H1 (cell line): ENCODE measurements at regions of chr11 and their contacts with region 1.

Region 1: GRCh38 chr11:66311965-66312548 is 4.8 kb downstream of the CD248 start:
- DNase-seq: peak; percentile 71 to 92
- H3K4me3 ChIP-seq: peak overlapping the region; percentile 44 to 79 (median 71)
- H3K27ac ChIP-seq: peak overlapping the region; percentile 7
- H3K4me1 ChIP-seq: peaks cover 3 to 17% (median 8%) of the 10 kb centered on the region in 4 experiments
- H3K27me3 ChIP-seq: peaks cover 0 to 3% (median 0%) of the 10 kb centered on the region in 4 experiments; a peak in 2 of 7 replicates
- CTCF ChIP-seq: peak in 2 of 3 experiments; percentile 84 to 93; a peak in 3 of 4 replicates
- EP300 ChIP-seq: no peak
- POLR2A ChIP-seq: peak in 1 of 2 experiments; percentile 35; a peak in 1 of 3 replicates
- RAD21 ChIP-seq: peak; percentile 92 to 93

Region 2: DNA sequence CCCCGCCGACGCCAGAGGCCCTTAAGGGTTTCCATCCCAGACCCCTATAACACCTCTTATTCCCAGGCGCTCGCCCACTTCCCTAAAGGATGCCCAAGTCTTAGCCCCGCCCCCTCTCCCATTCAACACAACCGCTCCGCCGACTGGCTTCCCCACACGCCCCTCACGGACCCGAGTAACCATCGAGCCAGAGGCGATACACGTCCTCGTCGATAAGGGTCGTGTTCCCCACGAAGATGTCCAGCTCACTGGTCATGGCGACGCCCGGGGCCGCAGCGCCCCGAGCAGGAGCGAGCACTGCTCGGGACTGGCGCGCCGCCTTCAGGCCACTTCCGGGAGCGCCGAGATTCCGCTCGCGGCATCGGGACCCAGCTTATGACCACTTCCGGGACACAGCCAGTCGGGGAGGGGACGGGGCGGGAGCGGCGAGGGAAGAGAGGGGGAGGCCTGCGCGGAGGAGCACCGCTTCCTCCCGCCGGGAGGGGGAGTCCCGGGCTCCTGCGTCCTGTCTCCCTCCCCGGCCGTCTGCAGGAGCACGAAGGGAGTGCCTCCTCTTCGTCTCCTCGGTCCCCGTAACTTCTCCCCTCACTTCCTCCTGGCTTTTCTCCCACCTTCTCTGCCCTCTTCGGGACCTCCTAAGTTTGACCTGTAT is 423.8 kb before region 1 on chr11 and contains the start of gene FIBP:
- CTCF ChIA-PET with region 1: no interaction called
- POLR2A ChIA-PET with region 1: no interaction called
- DNase-seq: peak; percentile 87 to 98
- H3K4me3 ChIP-seq: peak within 1 kb of the TSS; percentile 73 to 84 (median 79)
- H3K27ac ChIP-seq: peak within 1 kb of the TSS; percentile 75
- H3K4me1 ChIP-seq: peaks cover 0 to 27% (median 12%) of the 10 kb centered on the region in 4 experiments; a peak in 5 of 7 replicates
- H3K27me3 ChIP-seq: peaks cover 0 to 14% (median 8%) of the 10 kb centered on the region in 4 experiments; a peak in 6 of 7 replicates
- CTCF ChIP-seq: peak in 2 of 3 experiments; percentile 80 to 84; a peak in 3 of 4 replicates
- EP300 ChIP-seq: no peak; a peak in 1 of 3 replicates
- POLR2A ChIP-seq: peak in 1 of 2 experiments; percentile 93; a peak in 2 of 3 replicates
- RAD21 ChIP-seq: peak; percentile 42 to 64
- total RNA-seq, gene FIBP: 74.3 and 79.9 TPM in 2 replicates

Region 3: GRCh38 chr11:66268283-66268951 is 43.6 kb before region 1 on chr11 and contains the start of gene RAB1B:
- CTCF ChIA-PET with region 1: interaction called, 12 read pairs
- POLR2A ChIA-PET with region 1: no interaction called
- DNase-seq: peak; percentile 99 to 100
- H3K4me3 ChIP-seq: peak within 1 kb of the TSS; percentile 57 to 91 (median 82)
- H3K27ac ChIP-seq: peak within 1 kb of the TSS; percentile 92; the same call in 1 of the 2 replicates
- H3K4me1 ChIP-seq: peaks cover 0 to 5% (median 3%) of the 10 kb centered on the region in 4 experiments; a peak in 5 of 7 replicates
- H3K27me3 ChIP-seq: no peaks in the 10 kb centered on the region
- CTCF ChIP-seq: no peak; a peak in 1 of 4 replicates
- EP300 ChIP-seq: no peak
- POLR2A ChIP-seq: peak in 1 of 2 experiments; percentile 85; a peak in 2 of 3 replicates
- RAD21 ChIP-seq: no peak
- total RNA-seq, gene RAB1B: 100 and 106 TPM in 2 replicates

Region 4: DNA sequence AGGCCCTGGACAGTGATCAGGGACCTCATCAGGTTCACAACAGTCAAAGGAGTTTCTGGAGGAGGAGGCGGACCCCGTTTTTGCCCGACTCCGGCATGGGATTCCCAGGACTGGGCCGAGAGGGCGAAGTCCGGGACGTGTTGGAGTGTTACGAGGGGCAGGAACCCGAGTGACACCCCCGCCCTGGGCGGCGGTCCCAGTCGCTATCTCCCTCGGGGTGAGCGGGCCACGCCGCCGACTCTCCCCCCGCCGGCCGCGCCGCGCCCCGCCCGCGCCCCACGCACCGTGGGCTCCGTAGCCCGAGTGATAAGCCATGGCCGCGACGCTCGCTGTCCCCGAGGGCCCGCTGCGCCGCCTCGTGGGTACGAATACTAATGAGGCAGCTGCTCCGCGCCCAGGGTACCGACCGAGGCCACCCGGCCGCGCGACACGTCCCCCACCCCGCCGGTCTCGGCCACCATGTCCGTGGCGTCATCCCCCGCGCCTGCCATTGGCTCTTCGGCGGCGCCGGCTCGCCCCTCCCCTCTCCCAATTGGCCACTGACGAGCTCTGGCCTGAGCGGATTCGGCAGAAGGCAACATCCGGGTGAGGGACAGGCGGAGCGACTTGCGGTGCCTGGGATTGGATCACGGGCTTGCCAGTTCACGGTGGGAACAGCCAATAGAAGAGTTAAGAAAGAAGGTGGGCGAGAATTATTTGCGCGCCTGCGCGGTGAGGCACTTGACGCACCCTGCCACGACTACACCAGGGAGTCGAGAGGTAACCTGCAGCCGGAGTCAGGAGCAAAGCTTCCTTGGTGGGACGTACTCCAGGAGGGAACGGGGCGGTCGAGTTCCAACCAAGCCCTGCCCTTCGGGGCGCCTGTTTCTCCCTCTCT is 23.1 kb before region 1 on chr11 and contains the start of gene YIF1A:
- CTCF ChIA-PET with region 1: interaction called, 57 read pairs
- POLR2A ChIA-PET with region 1: interaction called, 16 read pairs
- DNase-seq: peak; percentile 95 to 98
- H3K4me3 ChIP-seq: peak within 1 kb of the TSS; percentile 76 to 94 (median 92)
- H3K27ac ChIP-seq: peak within 1 kb of the TSS; percentile 55
- H3K4me1 ChIP-seq: peaks cover 0 to 21% (median 6%) of the 10 kb centered on the region in 4 experiments; a peak in 5 of 7 replicates
- H3K27me3 ChIP-seq: peaks cover 2 to 27% (median 18%) of the 10 kb centered on the region in 4 experiments
- CTCF ChIP-seq: no peak
- EP300 ChIP-seq: no peak
- POLR2A ChIP-seq: peak in 1 of 2 experiments; percentile 72; a peak in 2 of 3 replicates
- RAD21 ChIP-seq: no peak
- total RNA-seq, gene YIF1A: 70.1 and 75.9 TPM in 2 replicates

Region 5: GRCh38 chr11:66328307-66329144 is 16.5 kb after region 1 on chr11:
- CTCF ChIA-PET with region 1: interaction called, 242 read pairs
- POLR2A ChIA-PET with region 1: interaction called, 25 read pairs
- DNase-seq: peak; percentile 76 to 94
- H3K4me3 ChIP-seq: peak overlapping the region in 3 of 4 experiments; percentile 4 to 38 (median 11); a peak in 3 of 8 replicates
- H3K27ac ChIP-seq: no peak overlapping the region
- H3K4me1 ChIP-seq: peaks cover 5 to 13% (median 8%) of the 10 kb centered on the region in 4 experiments; a peak in 6 of 7 replicates
- H3K27me3 ChIP-seq: peaks cover 0 to 7% (median 5%) of the 10 kb centered on the region in 4 experiments; a peak in 2 of 7 replicates
- CTCF ChIP-seq: peak; percentile 95 to 98 (median 97)
- EP300 ChIP-seq: no peak
- POLR2A ChIP-seq: no peak; a peak in 1 of 3 replicates
- RAD21 ChIP-seq: peak; percentile 73 to 82

Region 6: DNA sequence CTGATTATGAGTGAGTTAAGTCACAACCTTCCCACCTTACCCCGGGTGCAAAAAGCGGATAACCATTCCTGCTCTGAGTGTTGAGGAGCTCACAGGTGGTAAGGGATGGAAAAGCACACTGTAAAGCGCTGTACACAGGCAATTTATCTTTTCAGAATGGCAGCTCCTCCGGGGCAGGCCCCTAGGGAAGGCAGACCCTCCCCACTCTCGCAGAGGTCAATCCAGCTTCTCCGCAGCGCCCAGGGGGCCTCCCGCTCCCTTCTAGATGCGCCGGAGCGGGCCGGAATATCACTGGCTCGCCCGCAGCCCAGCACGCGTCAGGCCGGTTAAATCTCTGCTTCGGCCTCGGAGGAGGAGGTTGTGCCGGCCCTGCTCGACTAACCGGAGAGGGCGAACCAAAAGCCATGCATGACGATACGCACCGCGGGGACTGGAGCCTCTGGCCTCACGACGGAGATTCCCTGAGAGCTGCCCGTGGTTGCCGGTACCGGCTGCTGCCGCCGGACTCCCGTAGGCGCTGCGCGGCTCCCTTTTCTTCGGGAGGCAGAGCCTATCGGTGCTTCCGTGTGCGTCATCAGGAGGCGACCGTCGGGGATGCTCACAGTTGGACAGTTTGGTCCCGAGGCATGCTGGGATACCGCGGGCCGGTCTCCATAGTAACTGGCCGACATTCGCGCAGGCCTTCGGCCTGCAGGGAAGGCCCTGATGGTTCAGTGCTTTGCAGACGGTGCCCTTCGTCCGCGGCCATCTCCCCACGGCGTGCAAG is 32.7 kb after region 1 on chr11 and contains the start of gene BRMS1:
- CTCF ChIA-PET with region 1: interaction called, 55 read pairs
- POLR2A ChIA-PET with region 1: interaction called, 8 read pairs
- DNase-seq: peak; percentile 86 to 98
- H3K4me3 ChIP-seq: peak within 1 kb of the TSS; percentile 75 to 100 (median 92)
- H3K27ac ChIP-seq: peak within 1 kb of the TSS; percentile 61; the same call in 1 of the 2 replicates
- H3K4me1 ChIP-seq: peaks cover 0 to 15% (median 9%) of the 10 kb centered on the region in 4 experiments; a peak in 6 of 7 replicates
- H3K27me3 ChIP-seq: peaks cover 0 to 2% (median 0%) of the 10 kb centered on the region in 4 experiments; a peak in 3 of 7 replicates
- CTCF ChIP-seq: no peak
- EP300 ChIP-seq: no peak
- POLR2A ChIP-seq: peak in 1 of 2 experiments; percentile 96; a peak in 2 of 3 replicates
- RAD21 ChIP-seq: no peak
- total RNA-seq, gene BRMS1: 44.8 and 46.1 TPM in 2 replicates

Region 7: DNA sequence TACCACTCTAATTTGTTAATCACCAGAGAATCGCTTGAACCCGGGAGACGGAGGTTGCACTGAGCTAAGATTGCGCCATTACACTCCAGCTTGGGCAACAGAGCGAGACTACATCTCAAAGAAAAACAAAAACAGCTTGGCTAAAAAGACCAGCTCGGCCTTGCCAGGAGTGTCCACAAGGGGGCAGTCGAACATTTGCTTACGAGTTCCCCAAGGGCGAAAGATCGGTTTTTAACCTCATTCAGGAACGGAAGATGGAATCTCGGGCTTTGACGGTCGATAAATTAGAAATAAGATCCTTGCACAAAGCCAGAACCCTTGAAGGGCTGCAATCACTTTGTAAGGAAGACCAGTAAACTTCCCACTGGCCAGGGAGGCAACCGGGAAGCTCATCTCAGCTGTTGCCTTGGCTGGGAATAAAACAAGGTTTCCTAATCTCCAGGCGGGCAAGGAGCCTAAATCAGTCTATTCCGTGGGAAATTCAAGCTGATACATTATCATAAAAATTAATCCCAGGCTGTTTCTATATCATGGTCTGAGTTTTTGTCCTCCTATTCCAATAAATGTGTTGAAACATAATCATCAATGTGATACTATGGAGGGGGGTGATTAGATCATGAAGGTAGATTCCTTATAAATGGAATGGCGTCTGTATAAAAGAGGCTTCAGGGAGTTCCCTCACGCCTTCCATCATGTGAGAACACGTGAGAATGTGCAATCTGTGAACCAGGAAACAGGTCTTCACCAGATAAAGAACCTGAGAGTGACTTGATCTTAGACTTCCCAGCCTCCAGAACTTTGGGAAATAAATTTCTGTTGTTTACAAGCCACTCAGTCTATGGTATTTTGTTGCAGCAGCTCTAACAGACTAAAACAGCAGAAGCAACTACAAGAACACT is 74.4 kb after region 1 on chr11:
- CTCF ChIA-PET with region 1: interaction called, 25 read pairs
- POLR2A ChIA-PET with region 1: no interaction called
- DNase-seq: peak; percentile 75 to 97
- H3K4me3 ChIP-seq: peak overlapping the region in 3 of 4 experiments; percentile 16 to 46 (median 23); a peak in 6 of 8 replicates
- H3K27ac ChIP-seq: no peak overlapping the region
- H3K4me1 ChIP-seq: no peaks in the 10 kb centered on the region
- H3K27me3 ChIP-seq: no peaks in the 10 kb centered on the region
- CTCF ChIP-seq: peak; percentile 79 to 99 (median 89)
- EP300 ChIP-seq: no peak
- POLR2A ChIP-seq: no peak
- RAD21 ChIP-seq: peak; percentile 75 to 78